ENCODE measurements at regions of chr22 and their contacts with region 1.

Region 1: GRCh38 chr22:17706018-17706900 is 67.7 kb downstream of the BCL2L13 start:
- DNase-seq: peak; percentile 89
- ATAC-seq: peak; percentile 95
- H3K4me3 ChIP-seq: no peak overlapping the region
- H3K27ac ChIP-seq: peak overlapping the region; percentile 85
- H3K4me1 ChIP-seq: peaks cover 9% of the 10 kb centered on the region
- H3K27me3 ChIP-seq: no peaks in the 10 kb centered on the region
- CTCF ChIP-seq: no peak
- EP300 ChIP-seq: peak; percentile 56 to 66; a peak in 2 of 4 replicates
- POLR2A ChIP-seq: no peak
- RAD21 ChIP-seq: no peak

Region 2: GRCh38 chr22:17562906-17563870 is 143.1 kb before region 1 on chr22 and contains the start of gene SLC25A18:
- CTCF ChIA-PET with region 1: interaction called, 13 read pairs
- POLR2A ChIA-PET with region 1: interaction called, 4 read pairs
- RAD21 ChIA-PET with region 1: interaction called, 9 read pairs
- SMC1A ChIA-PET with region 1: no interaction called
- in situ Hi-C with region 1: no loop called
- intact Hi-C with region 1: no loop called
- DNase-seq: no peak
- ATAC-seq: no peak
- H3K4me3 ChIP-seq: no peak within 1 kb of the TSS
- H3K27ac ChIP-seq: no peak within 1 kb of the TSS
- H3K4me1 ChIP-seq: no peaks in the 10 kb centered on the region
- H3K27me3 ChIP-seq: no peaks in the 10 kb centered on the region; a peak in 1 of 4 replicates
- CTCF ChIP-seq: no peak
- EP300 ChIP-seq: no peak
- POLR2A ChIP-seq: no peak
- RAD21 ChIP-seq: no peak
- polyA plus RNA-seq, gene SLC25A18: 0.03 TPM in 1 of 2 experiments, not detected in the other

Region 3: DNA sequence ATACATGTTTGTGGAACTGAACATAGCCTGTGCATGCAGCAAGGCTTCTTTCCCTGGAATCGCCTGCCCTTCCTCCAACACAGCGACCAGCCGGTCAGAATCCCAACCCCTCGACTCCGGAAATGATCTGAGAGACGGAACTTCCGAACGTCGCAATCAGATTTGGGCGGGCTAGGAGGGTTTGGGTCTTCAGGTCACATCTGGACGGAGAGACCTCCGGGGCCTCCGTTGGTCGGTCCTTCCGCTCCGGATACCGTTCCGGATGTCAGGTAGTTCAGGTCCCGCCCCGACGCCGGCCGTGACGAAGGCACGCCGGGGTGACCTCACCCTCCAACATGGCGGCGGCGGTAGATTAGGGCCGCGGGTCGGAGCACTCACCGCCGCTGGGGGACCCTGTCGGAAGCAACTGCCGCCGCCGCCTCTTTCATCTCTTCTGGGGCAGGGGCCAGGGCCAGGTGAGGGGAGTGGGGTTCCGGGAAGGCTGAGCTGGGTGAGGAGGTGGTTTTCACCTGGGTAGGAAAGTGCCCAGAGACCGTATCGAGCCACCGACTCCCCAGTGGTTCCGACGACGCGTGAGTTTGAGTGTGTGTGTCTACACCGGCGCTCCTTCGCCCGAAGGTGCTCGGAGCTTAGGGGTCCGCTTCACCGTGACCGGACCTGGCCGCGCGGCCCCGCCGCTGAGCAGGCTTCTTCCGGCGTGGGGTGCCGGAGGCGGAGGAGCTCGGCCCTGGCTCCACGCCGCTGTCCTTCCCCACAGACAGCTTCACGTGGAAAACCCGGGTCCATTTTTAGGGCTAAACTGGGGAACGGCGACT is 67.6 kb before region 1 on chr22 and contains the start of gene BCL2L13:
- CTCF ChIA-PET with region 1: interaction called, 3 read pairs
- POLR2A ChIA-PET with region 1: no interaction called
- RAD21 ChIA-PET with region 1: interaction called, 5 read pairs
- SMC1A ChIA-PET with region 1: interaction called, 3 read pairs
- in situ Hi-C with region 1: no loop called
- intact Hi-C with region 1: loop called (anchors 10 kb)
- DNase-seq: peak; percentile 57
- ATAC-seq: peak; percentile 97
- H3K4me3 ChIP-seq: peak within 1 kb of the TSS; percentile 92
- H3K27ac ChIP-seq: peak within 1 kb of the TSS; percentile 86
- H3K4me1 ChIP-seq: peaks cover 8% of the 10 kb centered on the region
- H3K27me3 ChIP-seq: no peaks in the 10 kb centered on the region
- CTCF ChIP-seq: peak in 1 of 3 experiments; percentile 16; a peak in 1 of 6 replicates
- EP300 ChIP-seq: no peak
- POLR2A ChIP-seq: peak; percentile 94
- RAD21 ChIP-seq: no peak
- polyA plus RNA-seq, gene BCL2L13: 18.6 to 19.1 TPM

Region 4: DNA sequence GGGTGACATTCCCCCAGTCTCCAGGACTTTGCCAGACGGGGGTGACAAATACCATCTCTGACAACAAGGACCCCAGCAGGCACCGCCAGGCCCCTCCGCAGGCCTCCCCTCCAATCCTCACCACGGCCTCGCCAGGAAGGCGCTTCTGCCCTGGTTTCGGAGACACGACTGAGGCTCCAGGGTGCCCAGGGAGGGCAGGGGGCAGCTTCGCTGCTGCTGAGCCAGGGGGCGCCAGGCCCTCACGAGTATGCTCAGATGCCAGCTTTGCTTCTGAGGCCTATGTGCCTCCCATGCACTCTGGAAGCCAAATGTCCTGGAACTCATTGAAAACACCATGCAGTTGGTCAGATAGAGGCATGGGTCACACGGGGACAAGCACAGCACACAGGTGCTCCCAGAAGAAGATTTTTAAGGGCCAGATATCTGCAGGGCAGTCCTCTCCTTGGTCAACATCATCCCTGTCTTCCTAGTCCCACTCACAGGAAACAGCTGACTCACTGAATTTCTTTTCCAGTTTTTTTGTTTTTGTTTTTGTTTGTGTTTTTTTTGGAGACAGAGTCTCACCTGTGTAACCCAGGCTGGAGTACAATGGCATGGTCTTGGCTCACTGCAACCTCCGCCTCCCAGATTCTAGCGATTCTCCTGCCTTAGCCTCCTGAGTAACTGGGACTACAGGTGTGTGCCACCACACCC is 48.1 kb after region 1 on chr22:
- CTCF ChIA-PET with region 1: no interaction called
- POLR2A ChIA-PET with region 1: no interaction called
- RAD21 ChIA-PET with region 1: no interaction called
- SMC1A ChIA-PET with region 1: no interaction called
- in situ Hi-C with region 1: no loop called
- intact Hi-C with region 1: no loop called
- DNase-seq: no peak
- ATAC-seq: peak; percentile 82
- H3K4me3 ChIP-seq: no peak overlapping the region
- H3K27ac ChIP-seq: no peak overlapping the region
- H3K4me1 ChIP-seq: no peaks in the 10 kb centered on the region
- H3K27me3 ChIP-seq: no peaks in the 10 kb centered on the region
- CTCF ChIP-seq: peak; percentile 30 to 57 (median 52); a peak in 4 of 6 replicates
- EP300 ChIP-seq: no peak
- POLR2A ChIP-seq: no peak
- RAD21 ChIP-seq: peak; percentile 45; the same call in 1 of the 2 replicates

Region 5: GRCh38 chr22:17820879-17821439 is 114.7 kb after region 1 on chr22:
- CTCF ChIA-PET with region 1: no interaction called
- POLR2A ChIA-PET with region 1: no interaction called
- RAD21 ChIA-PET with region 1: no interaction called
- SMC1A ChIA-PET with region 1: no interaction called
- in situ Hi-C with region 1: no loop called
- intact Hi-C with region 1: no loop called
- DNase-seq: no peak
- ATAC-seq: peak; percentile 34
- H3K4me3 ChIP-seq: no peak overlapping the region
- H3K27ac ChIP-seq: no peak overlapping the region
- H3K4me1 ChIP-seq: no peaks in the 10 kb centered on the region
- H3K27me3 ChIP-seq: no peaks in the 10 kb centered on the region
- CTCF ChIP-seq: no peak
- EP300 ChIP-seq: no peak
- POLR2A ChIP-seq: no peak
- RAD21 ChIP-seq: no peak

Region 6: DNA sequence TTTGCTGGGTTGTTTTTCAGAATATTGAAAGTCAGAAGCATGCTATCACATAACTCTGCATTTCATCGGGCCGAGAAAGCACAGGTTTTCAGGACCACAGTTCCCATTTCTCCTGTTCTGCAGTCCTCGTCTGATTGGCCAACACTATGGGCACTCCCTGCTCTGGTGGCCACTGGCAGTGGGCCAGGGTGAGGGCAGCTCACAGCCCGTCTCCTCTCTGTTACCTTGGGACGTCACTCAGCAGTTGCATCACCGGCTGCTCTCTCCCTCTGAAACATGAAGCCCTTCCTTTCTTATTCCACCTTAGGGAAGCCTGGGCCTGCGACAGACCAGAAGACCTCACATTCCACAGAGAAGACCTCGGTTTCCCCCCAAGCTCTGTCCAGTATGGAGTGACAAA is 329.5 kb after region 1 on chr22:
- CTCF ChIA-PET with region 1: no interaction called
- POLR2A ChIA-PET with region 1: interaction called, 10 read pairs
- RAD21 ChIA-PET with region 1: no interaction called
- SMC1A ChIA-PET with region 1: no interaction called
- in situ Hi-C with region 1: no loop called
- intact Hi-C with region 1: no loop called
- DNase-seq: no peak
- ATAC-seq: no peak
- H3K4me3 ChIP-seq: no peak overlapping the region
- H3K27ac ChIP-seq: no peak overlapping the region
- H3K4me1 ChIP-seq: no peaks in the 10 kb centered on the region
- H3K27me3 ChIP-seq: no peaks in the 10 kb centered on the region
- CTCF ChIP-seq: no peak
- EP300 ChIP-seq: no peak
- POLR2A ChIP-seq: no peak
- RAD21 ChIP-seq: no peak